Ovary (tissue), 10 donors: ENCODE measurements at regions of chr2 and their contacts with region 1.

Region 1: GRCh38 chr2:109318150-109318948 is 189.3 kb downstream of the SH3RF3 start:
- DNase-seq: peak; percentile 79 to 91 (median 83)
- H3K4me3 ChIP-seq: peak overlapping the region; percentile 19
- H3K27ac ChIP-seq: peak overlapping the region; percentile 50 to 61
- H3K4me1 ChIP-seq: peaks cover 26% of the 10 kb centered on the region
- H3K27me3 ChIP-seq: no peaks in the 10 kb centered on the region
- CTCF ChIP-seq: peak in 2 of 3 donors; percentile 24 to 44
- EP300 ChIP-seq: no peak
- POLR2A ChIP-seq: no peak

Region 2: GRCh38 chr2:109128048-109128465 is 190.3 kb before region 1 on chr2:
- intact Hi-C with region 1: loop called in 2 of 4 experiments (anchors 5 to 10 kb)
- DNase-seq: peak; percentile 77 to 90 (median 86)
- H3K4me3 ChIP-seq: peak overlapping the region; percentile 52
- H3K27ac ChIP-seq: peak overlapping the region; percentile 41 to 59
- H3K4me1 ChIP-seq: no peaks in the 10 kb centered on the region
- H3K27me3 ChIP-seq: no peaks in the 10 kb centered on the region
- CTCF ChIP-seq: peak; percentile 57 to 90 (median 89)
- EP300 ChIP-seq: no peak
- POLR2A ChIP-seq: no peak

Region 3: DNA sequence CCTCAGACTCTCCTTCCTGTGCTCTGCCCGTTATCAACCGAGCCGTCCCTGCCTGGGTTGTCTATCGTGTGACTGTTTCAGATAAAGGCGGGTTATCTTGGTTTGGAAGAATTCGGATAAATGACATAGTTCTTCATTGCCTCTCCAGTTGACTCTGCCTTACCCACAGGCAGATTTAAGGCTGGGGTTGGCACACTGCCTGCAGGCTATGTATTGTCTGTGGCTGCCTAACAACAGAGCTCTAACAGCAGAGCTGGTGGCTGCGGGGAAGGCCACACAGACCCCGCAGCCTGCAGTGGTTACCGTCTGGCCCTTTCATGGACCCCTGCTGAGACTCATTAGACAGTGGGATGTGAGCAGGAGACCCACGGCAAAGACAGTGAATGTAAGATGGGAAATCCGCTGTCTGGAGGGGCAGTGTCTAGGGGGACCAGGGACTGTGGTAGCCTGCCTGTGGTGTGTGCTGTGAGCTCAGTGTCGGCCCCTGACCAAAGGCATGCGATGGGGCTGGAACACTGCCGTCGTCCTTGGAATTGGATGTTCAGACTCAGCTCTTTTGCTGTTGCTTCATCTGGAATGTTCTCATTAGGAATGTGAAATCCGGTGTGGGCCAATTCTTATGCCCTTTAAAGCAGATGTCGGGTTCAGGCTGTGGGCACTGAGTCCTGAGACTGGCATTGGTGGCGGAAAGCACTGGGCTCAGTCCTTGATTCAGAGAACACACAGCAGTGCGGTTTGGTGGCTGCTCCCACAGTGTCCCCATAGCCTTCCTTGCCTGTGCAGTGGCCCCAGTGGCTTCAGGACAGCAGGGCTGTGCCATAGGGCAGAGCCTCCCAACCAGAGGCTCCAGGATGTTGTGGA is 144.8 kb before region 1 on chr2:
- intact Hi-C with region 1: loop called in 1 of 4 experiments (anchors 10 kb)
- DNase-seq: peak; percentile 80 to 92 (median 86)
- H3K4me3 ChIP-seq: no peak overlapping the region
- H3K27ac ChIP-seq: peak overlapping the region; percentile 27 to 78
- H3K4me1 ChIP-seq: peaks cover 25% of the 10 kb centered on the region
- H3K27me3 ChIP-seq: no peaks in the 10 kb centered on the region
- CTCF ChIP-seq: no peak
- EP300 ChIP-seq: no peak
- POLR2A ChIP-seq: peak; percentile 31

Region 4: GRCh38 chr2:109242654-109243331 is 75.6 kb before region 1 on chr2:
- intact Hi-C with region 1: loop called in 1 of 4 experiments (anchors 10 kb)
- DNase-seq: peak in 1 of 5 donors; percentile 65
- H3K4me3 ChIP-seq: no peak overlapping the region
- H3K27ac ChIP-seq: peak overlapping the region in 1 of 2 donors; percentile 51
- H3K4me1 ChIP-seq: peaks cover 22% of the 10 kb centered on the region
- H3K27me3 ChIP-seq: no peaks in the 10 kb centered on the region
- CTCF ChIP-seq: no peak
- EP300 ChIP-seq: no peak
- POLR2A ChIP-seq: no peak

Region 5: GRCh38 chr2:109270500-109271312 is 47.6 kb before region 1 on chr2:
- intact Hi-C with region 1: loop called in 1 of 4 experiments (anchors 5 kb)
- DNase-seq: peak in 2 of 5 donors; percentile 38 to 57
- H3K4me3 ChIP-seq: no peak overlapping the region
- H3K27ac ChIP-seq: no peak overlapping the region
- H3K4me1 ChIP-seq: peaks cover 6% of the 10 kb centered on the region
- H3K27me3 ChIP-seq: no peaks in the 10 kb centered on the region
- CTCF ChIP-seq: no peak
- EP300 ChIP-seq: no peak
- POLR2A ChIP-seq: no peak

Region 6: GRCh38 chr2:109284826-109285225 is 33.5 kb before region 1 on chr2:
- intact Hi-C with region 1: no loop called
- DNase-seq: no peak
- H3K4me3 ChIP-seq: no peak overlapping the region
- H3K27ac ChIP-seq: no peak overlapping the region
- H3K4me1 ChIP-seq: no peaks in the 10 kb centered on the region
- H3K27me3 ChIP-seq: no peaks in the 10 kb centered on the region
- CTCF ChIP-seq: no peak
- EP300 ChIP-seq: no peak
- POLR2A ChIP-seq: no peak

Region 7: DNA sequence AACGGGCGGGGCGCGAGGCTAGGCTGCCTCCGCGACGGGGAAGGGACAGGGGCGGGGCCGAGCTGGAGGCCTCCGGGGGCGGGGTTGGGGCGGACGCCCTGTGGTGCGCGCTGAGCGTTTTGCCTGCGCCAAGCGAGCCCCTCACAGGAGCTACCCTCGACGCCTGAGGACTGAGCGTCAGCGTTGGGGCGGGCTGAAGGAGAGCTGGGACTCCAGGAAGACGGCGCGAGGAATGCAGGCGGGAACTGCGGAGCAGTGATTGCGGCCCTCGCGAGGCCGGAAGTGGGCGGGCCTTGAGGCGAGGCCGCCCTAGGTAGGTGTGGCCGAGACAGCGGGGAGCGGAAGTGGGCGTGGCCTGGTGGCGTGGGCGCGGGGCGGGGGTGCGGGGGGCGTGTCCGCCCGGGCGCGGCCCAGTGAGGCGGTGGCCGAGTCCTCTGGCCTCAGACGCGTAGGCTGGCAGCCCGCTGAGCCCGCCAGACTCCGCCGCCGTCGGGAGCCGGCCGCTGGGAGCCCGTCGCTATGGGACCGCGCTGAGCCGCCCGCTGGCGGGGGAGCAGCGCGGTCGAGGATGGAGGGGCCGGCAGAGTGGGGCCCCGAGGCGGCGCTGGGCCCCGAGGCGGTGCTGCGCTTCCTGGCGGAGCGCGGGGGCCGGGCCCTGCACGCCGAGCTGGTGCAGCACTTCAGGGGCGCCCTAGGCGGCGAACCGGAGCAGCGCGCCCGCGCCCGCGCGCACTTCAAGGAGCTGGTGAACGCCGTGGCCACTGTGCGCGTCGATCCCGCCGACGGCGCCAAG is 295.8 kb after region 1 on chr2 and contains the starts of genes SEPTIN10 and SOWAHC:
- intact Hi-C with region 1: loop called in 1 of 4 experiments (anchors 5 kb)
- DNase-seq: peak; percentile 96 to 98 (median 97)
- H3K4me3 ChIP-seq: peak within 1 kb of the TSS; percentile 85
- H3K27ac ChIP-seq: peak within 1 kb of the TSS; percentile 98 to 99
- H3K4me1 ChIP-seq: peaks cover 18% of the 10 kb centered on the region
- H3K27me3 ChIP-seq: no peaks in the 10 kb centered on the region
- CTCF ChIP-seq: no peak
- EP300 ChIP-seq: peak; percentile 88
- POLR2A ChIP-seq: peak; percentile 84
- total RNA-seq, gene SEPTIN10: 71.6 to 93.8 (median 78.0) TPM
- total RNA-seq, gene SOWAHC: 13.9 to 36.1 (median 17.0) TPM